ENCODE measurements at regions of chr1 and their contacts with region 1.

Region 1: DNA sequence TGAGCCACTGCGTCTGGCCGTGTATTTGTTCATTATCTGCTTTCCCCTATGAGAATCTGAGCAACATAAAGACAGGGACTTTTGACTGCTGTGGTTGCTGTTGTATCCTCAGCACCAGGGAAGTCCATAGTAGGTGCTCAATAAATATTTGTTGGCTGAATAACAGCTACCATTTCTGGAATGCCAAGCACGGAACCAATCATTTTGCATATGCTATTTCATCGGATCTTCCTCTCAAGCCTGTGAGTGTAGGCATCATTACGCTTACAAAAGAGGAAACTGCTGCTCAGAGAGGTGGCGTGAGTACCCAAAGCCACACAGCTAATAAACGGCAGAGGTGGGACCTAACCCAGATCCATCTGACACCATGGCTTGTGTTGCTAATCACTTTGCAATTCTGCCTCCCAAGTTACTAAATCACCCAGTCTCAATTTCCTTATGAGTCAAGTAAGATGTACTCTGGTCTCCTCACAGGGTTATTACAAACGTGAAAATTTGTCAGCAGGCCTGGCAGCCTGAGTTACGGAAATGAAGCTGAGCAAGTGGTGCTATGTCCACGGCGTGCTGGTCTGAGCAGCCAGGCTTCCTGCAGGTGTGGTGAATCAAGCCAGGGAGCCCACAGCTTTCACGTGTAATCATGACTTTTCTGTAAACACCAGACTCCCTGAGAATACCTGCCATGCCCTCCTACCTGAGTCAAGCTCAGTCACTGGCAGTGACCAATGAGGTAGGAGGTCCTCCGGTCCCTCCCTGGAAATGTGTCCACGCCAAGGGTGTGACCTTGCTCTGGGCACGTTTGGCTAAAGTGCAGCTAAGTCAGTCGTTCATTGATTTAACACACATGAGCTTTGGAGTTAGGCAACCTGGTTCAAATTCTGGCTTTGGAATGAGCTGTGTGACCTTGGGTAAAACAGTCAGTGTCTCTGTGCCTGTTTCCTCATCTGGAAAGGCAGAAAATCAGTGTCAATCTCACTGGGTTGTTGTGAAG is 4.8 kb upstream of the RHCE start:
- DNase-seq: peak; percentile 56
- H3K4me3 ChIP-seq: no peak overlapping the region
- H3K27ac ChIP-seq: no peak overlapping the region
- H3K4me1 ChIP-seq: no peaks in the 10 kb centered on the region
- H3K27me3 ChIP-seq: no peaks in the 10 kb centered on the region
- CTCF ChIP-seq: no peak

Region 2: GRCh38 chr1:25343872-25344271 is 81.5 kb before region 1 on chr1:
- CTCF ChIA-PET with region 1: no interaction called
- dilution Hi-C with region 1: loop called (anchors 5 kb)
- in situ Hi-C with region 1: no loop called
- intact Hi-C with region 1: no loop called
- DNase-seq: peak; percentile 61
- H3K4me3 ChIP-seq: no peak overlapping the region
- H3K27ac ChIP-seq: peak overlapping the region; percentile 13
- H3K4me1 ChIP-seq: peaks cover 25% of the 10 kb centered on the region
- H3K27me3 ChIP-seq: no peaks in the 10 kb centered on the region
- CTCF ChIP-seq: no peak

Region 3: GRCh38 chr1:25392841-25393240 is 32.6 kb before region 1 on chr1:
- CTCF ChIA-PET with region 1: no interaction called
- dilution Hi-C with region 1: no loop called
- in situ Hi-C with region 1: no loop called
- intact Hi-C with region 1: no loop called
- DNase-seq: no peak
- H3K4me3 ChIP-seq: no peak overlapping the region
- H3K27ac ChIP-seq: no peak overlapping the region
- H3K4me1 ChIP-seq: no peaks in the 10 kb centered on the region
- H3K27me3 ChIP-seq: no peaks in the 10 kb centered on the region
- CTCF ChIP-seq: no peak

Region 4: DNA sequence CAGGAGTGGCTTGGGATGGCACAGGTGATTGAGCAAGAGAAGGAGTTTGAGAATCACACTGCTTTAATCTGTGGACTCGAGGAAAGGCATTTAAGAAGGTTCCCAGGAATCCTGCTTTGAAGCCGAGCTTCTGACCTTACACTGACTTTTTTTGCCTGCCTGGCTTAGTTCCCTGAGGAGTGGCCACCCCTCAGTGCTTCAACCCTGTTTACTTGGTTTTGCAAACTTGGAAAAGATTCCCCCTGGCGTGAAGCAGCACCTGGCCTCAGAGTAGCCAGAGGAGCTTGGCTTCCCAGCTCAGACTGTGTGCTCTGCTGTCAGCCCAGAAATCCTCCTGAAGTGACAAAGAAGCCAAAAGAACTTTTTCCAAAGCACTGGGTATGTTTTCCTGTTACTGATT is 69.6 kb after region 1 on chr1:
- CTCF ChIA-PET with region 1: no interaction called
- dilution Hi-C with region 1: loop called (anchors 5 kb)
- in situ Hi-C with region 1: no loop called
- intact Hi-C with region 1: no loop called
- DNase-seq: no peak
- H3K4me3 ChIP-seq: no peak overlapping the region
- H3K27ac ChIP-seq: no peak overlapping the region
- H3K4me1 ChIP-seq: no peaks in the 10 kb centered on the region
- H3K27me3 ChIP-seq: no peaks in the 10 kb centered on the region
- CTCF ChIP-seq: no peak

Region 5: GRCh38 chr1:25529518-25530185 is 104.3 kb after region 1 on chr1:
- CTCF ChIA-PET with region 1: no interaction called
- dilution Hi-C with region 1: loop called (anchors 5 kb)
- in situ Hi-C with region 1: no loop called
- intact Hi-C with region 1: loop called (anchors 10 kb)
- DNase-seq: no peak
- H3K4me3 ChIP-seq: no peak overlapping the region
- H3K27ac ChIP-seq: no peak overlapping the region
- H3K4me1 ChIP-seq: peaks cover 3% of the 10 kb centered on the region
- H3K27me3 ChIP-seq: no peaks in the 10 kb centered on the region
- CTCF ChIP-seq: no peak